ENCODE measurements at regions of chr19 and their contacts with region 1.

Region 1: GRCh38 chr19:39328046-39328705 is 7.5 kb upstream of the LRFN1 start:
- DNase-seq: peak; percentile 71 to 90 (median 81)
- ATAC-seq: peak; percentile 93
- H3K4me3 ChIP-seq: no peak overlapping the region
- H3K4me3 Mint-ChIP-seq: peak overlapping the region; percentile 47
- H3K27ac ChIP-seq: no peak overlapping the region
- H3K27ac Mint-ChIP-seq: peak overlapping the region; percentile 71
- H3K4me1 ChIP-seq: peaks cover 52% of the 10 kb centered on the region
- H3K4me1 Mint-ChIP-seq: peaks cover 49% of the 10 kb centered on the region
- H3K27me3 ChIP-seq: no peaks in the 10 kb centered on the region
- H3K27me3 Mint-ChIP-seq: no peaks in the 10 kb centered on the region
- CTCF ChIP-seq: peak; percentile 96

Region 2: DNA sequence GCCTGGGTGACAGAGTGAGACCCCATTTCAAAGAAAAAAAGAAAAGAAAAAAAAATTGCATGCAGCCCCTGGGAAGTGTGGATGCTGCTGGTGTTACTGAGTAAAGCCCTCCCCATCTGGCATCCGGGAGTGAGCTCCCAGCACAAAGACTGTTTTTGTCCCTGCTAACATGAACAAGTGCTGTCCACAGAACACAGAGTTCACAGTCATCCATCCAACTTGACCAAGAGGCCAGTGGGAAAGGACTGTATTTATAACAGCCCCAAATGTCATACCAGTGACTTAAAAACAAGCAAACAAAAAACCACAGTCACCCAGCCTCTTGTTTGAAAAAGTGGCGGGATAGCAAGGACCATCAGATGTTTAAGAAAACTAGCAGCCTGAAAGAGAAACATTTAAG is 363.4 kb before region 1 on chr19:
- CTCF ChIA-PET with region 1: no interaction called
- POLR2A ChIA-PET with region 1: no interaction called
- intact Hi-C with region 1: loop called in 1 of 2 experiments (anchors 2 kb)
- DNase-seq: no peak
- ATAC-seq: no peak
- H3K4me3 ChIP-seq: no peak overlapping the region
- H3K4me3 Mint-ChIP-seq: no peak overlapping the region
- H3K27ac ChIP-seq: no peak overlapping the region
- H3K27ac Mint-ChIP-seq: no peak overlapping the region
- H3K4me1 ChIP-seq: peaks cover 4% of the 10 kb centered on the region
- H3K4me1 Mint-ChIP-seq: peaks cover 5% of the 10 kb centered on the region
- H3K27me3 ChIP-seq: no peaks in the 10 kb centered on the region
- H3K27me3 Mint-ChIP-seq: peaks cover 17% of the 10 kb centered on the region
- CTCF ChIP-seq: no peak

Region 3: DNA sequence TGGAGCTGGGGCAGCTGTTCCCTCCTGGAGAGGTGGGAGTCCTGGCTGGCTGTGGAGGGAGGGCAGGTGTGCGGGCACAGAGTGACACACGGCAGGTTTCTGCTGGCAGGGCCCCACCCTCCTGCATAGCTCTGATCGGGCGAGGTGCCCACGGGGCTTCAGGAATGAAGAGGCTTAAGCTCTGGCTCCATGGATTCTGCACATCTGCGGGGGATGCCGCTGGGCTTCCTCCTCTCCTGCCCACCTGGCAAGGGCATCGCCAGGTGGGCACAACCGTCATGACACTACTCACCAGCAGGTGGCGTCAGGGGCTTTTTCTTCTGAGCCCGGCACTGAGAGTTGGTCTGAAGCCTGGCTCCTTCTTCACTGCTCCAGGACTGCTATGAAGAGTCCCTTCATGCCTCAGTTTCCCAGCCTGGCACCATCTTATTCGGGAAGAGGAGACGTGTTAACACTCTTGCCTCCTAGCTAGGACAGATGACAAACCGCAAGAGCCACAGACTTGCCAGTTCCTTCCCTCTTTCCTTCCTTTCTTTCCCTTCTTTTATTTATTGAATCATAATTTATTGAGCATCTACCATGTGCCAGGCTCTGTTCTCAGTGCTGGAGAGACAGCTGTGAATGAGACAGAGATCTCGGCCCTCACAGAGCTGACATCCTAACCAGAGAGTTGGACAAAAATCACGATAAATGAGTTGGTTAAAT is 217.8 kb before region 1 on chr19:
- CTCF ChIA-PET with region 1: interaction called, 6 read pairs
- POLR2A ChIA-PET with region 1: no interaction called
- intact Hi-C with region 1: loop called in 1 of 2 experiments (anchors 1 kb)
- DNase-seq: peak; percentile 64 to 83 (median 73)
- ATAC-seq: peak; percentile 91
- H3K4me3 ChIP-seq: no peak overlapping the region
- H3K4me3 Mint-ChIP-seq: no peak overlapping the region
- H3K27ac ChIP-seq: no peak overlapping the region
- H3K27ac Mint-ChIP-seq: no peak overlapping the region
- H3K4me1 ChIP-seq: peaks cover 6% of the 10 kb centered on the region
- H3K4me1 Mint-ChIP-seq: no peaks in the 10 kb centered on the region
- H3K27me3 ChIP-seq: no peaks in the 10 kb centered on the region
- H3K27me3 Mint-ChIP-seq: no peaks in the 10 kb centered on the region
- CTCF ChIP-seq: peak; percentile 75

Region 4: GRCh38 chr19:39212375-39212742 is 115.8 kb before region 1 on chr19:
- CTCF ChIA-PET with region 1: interaction called, 20 read pairs
- POLR2A ChIA-PET with region 1: interaction called, 3 read pairs
- intact Hi-C with region 1: loop called (anchors 1 kb)
- DNase-seq: peak; percentile 28 to 78 (median 63)
- ATAC-seq: peak; percentile 73
- H3K4me3 ChIP-seq: no peak overlapping the region
- H3K4me3 Mint-ChIP-seq: no peak overlapping the region
- H3K27ac ChIP-seq: no peak overlapping the region
- H3K27ac Mint-ChIP-seq: no peak overlapping the region
- H3K4me1 ChIP-seq: no peaks in the 10 kb centered on the region
- H3K4me1 Mint-ChIP-seq: no peaks in the 10 kb centered on the region
- H3K27me3 ChIP-seq: no peaks in the 10 kb centered on the region
- H3K27me3 Mint-ChIP-seq: peaks cover 10% of the 10 kb centered on the region
- CTCF ChIP-seq: peak; percentile 47

Region 5: GRCh38 chr19:39297654-39298634 is 30.2 kb before region 1 on chr19:
- CTCF ChIA-PET with region 1: interaction called, 15 read pairs
- POLR2A ChIA-PET with region 1: no interaction called
- intact Hi-C with region 1: no loop called
- DNase-seq: peak; percentile 44 to 88 (median 66)
- ATAC-seq: peak; percentile 86
- H3K4me3 ChIP-seq: peak overlapping the region in 1 of 2 experiments; percentile 40
- H3K4me3 Mint-ChIP-seq: peak overlapping the region; percentile 72
- H3K27ac ChIP-seq: peak overlapping the region in 1 of 2 experiments; percentile 36
- H3K27ac Mint-ChIP-seq: peak overlapping the region; percentile 56
- H3K4me1 ChIP-seq: peaks cover 19% of the 10 kb centered on the region
- H3K4me1 Mint-ChIP-seq: peaks cover 24% of the 10 kb centered on the region
- H3K27me3 ChIP-seq: no peaks in the 10 kb centered on the region
- H3K27me3 Mint-ChIP-seq: no peaks in the 10 kb centered on the region
- CTCF ChIP-seq: no peak

Region 6: DNA sequence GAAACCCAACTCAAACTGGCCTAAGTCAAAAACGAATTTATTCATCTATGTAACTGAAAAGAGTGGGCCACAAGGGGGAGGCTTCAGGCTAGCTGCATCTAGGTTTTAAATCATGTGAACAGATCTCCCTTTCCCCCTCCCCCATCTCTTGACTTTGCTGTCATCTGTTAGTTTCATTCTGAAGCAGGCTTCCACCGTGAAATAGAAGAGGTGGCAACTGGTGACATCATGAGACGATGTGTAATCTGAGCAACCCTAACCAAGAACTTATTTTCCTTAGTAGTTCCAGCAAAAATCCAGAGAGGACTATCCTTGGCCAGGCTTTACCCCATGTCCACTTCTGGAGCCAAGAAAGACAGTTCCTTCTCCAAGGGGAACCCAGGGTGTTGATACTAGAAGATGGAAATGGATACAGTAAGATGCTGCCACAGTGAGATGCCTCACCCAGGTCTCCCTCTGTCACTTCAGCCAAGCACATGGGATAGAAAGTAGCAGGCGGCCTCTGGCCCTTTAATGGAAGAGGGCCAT is 23.4 kb after region 1 on chr19:
- CTCF ChIA-PET with region 1: no interaction called
- POLR2A ChIA-PET with region 1: no interaction called
- intact Hi-C with region 1: no loop called
- DNase-seq: peak in 2 of 9 experiments; percentile 54 to 65
- ATAC-seq: peak; percentile 75
- H3K4me3 ChIP-seq: no peak overlapping the region
- H3K4me3 Mint-ChIP-seq: no peak overlapping the region
- H3K27ac ChIP-seq: no peak overlapping the region
- H3K27ac Mint-ChIP-seq: no peak overlapping the region
- H3K4me1 ChIP-seq: no peaks in the 10 kb centered on the region
- H3K4me1 Mint-ChIP-seq: peaks cover 36% of the 10 kb centered on the region
- H3K27me3 ChIP-seq: no peaks in the 10 kb centered on the region
- H3K27me3 Mint-ChIP-seq: no peaks in the 10 kb centered on the region
- CTCF ChIP-seq: no peak

Region 7: GRCh38 chr19:39372047-39372802 is 44.0 kb after region 1 on chr19:
- CTCF ChIA-PET with region 1: no interaction called
- POLR2A ChIA-PET with region 1: no interaction called
- intact Hi-C with region 1: no loop called
- DNase-seq: no peak
- ATAC-seq: no peak
- H3K4me3 ChIP-seq: no peak overlapping the region
- H3K4me3 Mint-ChIP-seq: no peak overlapping the region
- H3K27ac ChIP-seq: no peak overlapping the region
- H3K27ac Mint-ChIP-seq: no peak overlapping the region
- H3K4me1 ChIP-seq: no peaks in the 10 kb centered on the region
- H3K4me1 Mint-ChIP-seq: no peaks in the 10 kb centered on the region
- H3K27me3 ChIP-seq: no peaks in the 10 kb centered on the region
- H3K27me3 Mint-ChIP-seq: no peaks in the 10 kb centered on the region
- CTCF ChIP-seq: no peak

Measured in CD8-positive, alpha-beta T cell (primary cell).